ENCODE measurements at regions of chr17 and their contacts with region 1.

Region 1: DNA sequence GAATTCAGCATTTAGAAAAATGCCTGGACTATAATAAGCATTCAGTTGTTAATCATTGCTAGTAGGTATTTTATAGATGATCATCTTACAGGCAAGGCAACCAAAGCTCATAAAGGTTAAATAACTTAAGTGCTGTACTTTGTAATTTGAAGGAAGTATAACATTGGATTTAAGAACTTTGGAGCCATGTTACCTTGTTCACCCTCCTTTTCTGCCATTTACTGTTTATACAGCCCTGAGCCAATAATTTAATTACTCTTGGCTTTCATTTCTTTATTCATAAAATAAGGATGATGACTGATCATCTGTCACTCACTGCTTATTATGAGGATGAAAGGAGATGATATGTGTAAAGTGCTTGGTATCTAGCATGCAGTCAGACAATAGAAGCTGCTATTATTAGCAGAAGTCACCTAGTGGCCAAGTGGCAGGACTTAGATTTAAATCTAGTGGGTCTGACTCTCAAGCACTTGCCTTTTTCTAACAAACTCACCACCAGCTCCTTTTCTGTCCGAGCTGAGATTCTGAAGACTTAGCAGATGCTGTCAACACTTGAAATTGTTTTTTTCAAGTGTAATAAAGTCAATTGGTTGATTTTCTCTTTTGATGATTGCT is 18.3 kb upstream of the DDX52 start:
- H3K4me3 ChIP-seq: no peak overlapping the region
- H3K27ac ChIP-seq: no peak overlapping the region
- H3K4me1 ChIP-seq: no peaks in the 10 kb centered on the region
- CTCF ChIP-seq: no peak

Region 2: DNA sequence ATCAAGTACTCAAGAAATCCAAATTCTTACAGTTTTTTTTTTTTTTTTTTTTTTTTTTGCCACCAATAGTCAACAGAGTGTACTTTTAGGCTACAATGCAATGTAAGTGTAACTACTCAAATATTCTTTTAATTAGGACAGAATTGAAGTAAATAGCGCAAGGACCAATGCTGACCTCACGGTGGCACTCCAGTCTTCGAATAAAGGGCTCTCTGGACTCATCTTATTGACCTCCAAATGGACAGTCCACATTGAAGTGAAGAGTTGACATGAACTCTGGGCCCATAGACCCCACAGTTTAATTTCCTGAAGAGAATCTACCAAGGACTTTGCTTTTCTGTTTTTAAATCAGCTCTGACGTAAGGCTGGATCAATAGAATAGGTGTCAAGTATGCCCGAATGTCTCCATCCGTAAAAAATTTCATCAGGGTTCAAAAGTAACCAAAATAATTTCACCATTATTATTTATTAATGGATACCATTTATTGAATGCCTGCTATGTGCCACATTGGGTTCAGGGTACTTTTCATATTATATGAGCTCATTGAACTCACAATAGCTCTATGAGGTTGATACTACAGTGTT is 11.0 kb before region 1 on chr17:
- CTCF ChIA-PET with region 1: interaction called, 18 read pairs
- POLR2A ChIA-PET with region 1: no interaction called
- H3K4me3 ChIP-seq: no peak overlapping the region
- H3K27ac ChIP-seq: no peak overlapping the region
- H3K4me1 ChIP-seq: no peaks in the 10 kb centered on the region
- CTCF ChIP-seq: no peak

Region 3: GRCh38 chr17:37671824-37672547 is 10.5 kb after region 1 on chr17:
- CTCF ChIA-PET with region 1: no interaction called
- POLR2A ChIA-PET with region 1: no interaction called
- H3K4me3 ChIP-seq: no peak overlapping the region
- H3K27ac ChIP-seq: no peak overlapping the region
- H3K4me1 ChIP-seq: peaks cover 2% of the 10 kb centered on the region
- CTCF ChIP-seq: no peak

Measured in HEK293 (cell line).